ENCODE measurements at regions of chr11 and their contacts with region 1.

Region 1: GRCh38 chr11:128831174-128832120 is 35.6 kb downstream of the KCNJ1 start:
- DNase-seq: peak; percentile 75 to 93 (median 88)
- ATAC-seq: peak; percentile 81
- H3K4me3 ChIP-seq: peak overlapping the region; percentile 11 to 26
- H3K4me3 Mint-ChIP-seq: peak overlapping the region; percentile 55
- H3K27ac ChIP-seq: peak overlapping the region; percentile 31 to 84
- H3K27ac Mint-ChIP-seq: peak overlapping the region; percentile 80
- H3K4me1 ChIP-seq: peaks cover 9% of the 10 kb centered on the region
- H3K4me1 Mint-ChIP-seq: peaks cover 18% of the 10 kb centered on the region
- H3K27me3 ChIP-seq: no peaks in the 10 kb centered on the region
- H3K27me3 Mint-ChIP-seq: no peaks in the 10 kb centered on the region
- CTCF ChIP-seq: peak; percentile 87

Region 2: GRCh38 chr11:128039140-128040021 is 792.1 kb before region 1 on chr11:
- CTCF ChIA-PET with region 1: interaction called, 13 read pairs
- POLR2A ChIA-PET with region 1: no interaction called
- intact Hi-C with region 1: no loop called
- DNase-seq: peak; percentile 48 to 94 (median 79)
- ATAC-seq: peak; percentile 91
- H3K4me3 ChIP-seq: peak overlapping the region; percentile 40 to 50
- H3K4me3 Mint-ChIP-seq: peak overlapping the region; percentile 59
- H3K27ac ChIP-seq: peak overlapping the region; percentile 55 to 80
- H3K27ac Mint-ChIP-seq: peak overlapping the region; percentile 87
- H3K4me1 ChIP-seq: peaks cover 76% of the 10 kb centered on the region
- H3K4me1 Mint-ChIP-seq: peaks cover 56% of the 10 kb centered on the region
- H3K27me3 ChIP-seq: no peaks in the 10 kb centered on the region
- H3K27me3 Mint-ChIP-seq: no peaks in the 10 kb centered on the region
- CTCF ChIP-seq: peak; percentile 22

Region 3: DNA sequence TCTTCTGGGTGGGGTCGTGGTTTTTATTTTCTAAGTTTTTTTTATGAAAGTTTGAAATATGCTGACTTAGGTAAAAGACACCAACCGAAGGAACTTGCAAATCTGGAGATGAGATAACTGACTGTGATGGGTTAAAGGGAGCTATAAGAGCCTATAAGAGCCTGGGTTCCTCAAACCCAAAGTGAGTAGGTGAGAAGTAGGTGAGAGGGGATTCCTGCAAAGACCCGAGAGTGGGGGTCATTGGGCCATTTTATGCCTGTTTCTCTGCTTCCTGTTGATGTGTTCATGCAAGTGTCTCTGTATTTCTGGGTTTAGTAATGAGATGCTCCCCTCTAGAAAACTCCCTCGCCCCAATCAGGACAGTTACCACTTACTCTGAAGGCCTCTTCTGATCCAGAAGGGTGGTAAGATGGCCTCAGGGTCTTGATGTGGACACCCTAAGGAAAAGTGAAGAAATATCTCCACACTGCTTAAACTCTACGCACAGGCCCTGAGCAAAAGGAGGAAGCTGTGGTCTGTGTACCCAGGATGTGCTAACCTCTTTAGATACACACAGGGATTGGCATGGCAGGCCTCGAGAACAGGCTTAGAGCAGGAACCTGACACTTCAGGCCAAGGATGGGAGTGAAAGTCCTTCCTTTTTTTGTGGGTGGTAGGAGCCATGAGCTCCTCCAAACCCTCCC is 135.8 kb before region 1 on chr11:
- CTCF ChIA-PET with region 1: no interaction called
- POLR2A ChIA-PET with region 1: no interaction called
- intact Hi-C with region 1: loop called in 1 of 2 experiments (anchors 5 kb)
- DNase-seq: peak in 6 of 9 experiments; percentile 29 to 78 (median 54)
- ATAC-seq: peak; percentile 47
- H3K4me3 ChIP-seq: peak overlapping the region; percentile 93 to 95
- H3K4me3 Mint-ChIP-seq: peak overlapping the region; percentile 98
- H3K27ac ChIP-seq: peak overlapping the region; percentile 80 to 89
- H3K27ac Mint-ChIP-seq: peak overlapping the region; percentile 98
- H3K4me1 ChIP-seq: peaks cover 54% of the 10 kb centered on the region
- H3K4me1 Mint-ChIP-seq: peaks cover 58% of the 10 kb centered on the region
- H3K27me3 ChIP-seq: no peaks in the 10 kb centered on the region
- H3K27me3 Mint-ChIP-seq: no peaks in the 10 kb centered on the region
- CTCF ChIP-seq: no peak

Region 4: GRCh38 chr11:128848815-128849455 is 17.5 kb after region 1 on chr11:
- CTCF ChIA-PET with region 1: interaction called, 89 read pairs
- POLR2A ChIA-PET with region 1: interaction called, 3 read pairs
- intact Hi-C with region 1: no loop called
- DNase-seq: peak; percentile 42 to 80 (median 69)
- ATAC-seq: peak; percentile 70
- H3K4me3 ChIP-seq: no peak overlapping the region
- H3K4me3 Mint-ChIP-seq: no peak overlapping the region
- H3K27ac ChIP-seq: no peak overlapping the region
- H3K27ac Mint-ChIP-seq: no peak overlapping the region
- H3K4me1 ChIP-seq: peaks cover 14% of the 10 kb centered on the region
- H3K4me1 Mint-ChIP-seq: peaks cover 28% of the 10 kb centered on the region
- H3K27me3 ChIP-seq: no peaks in the 10 kb centered on the region
- H3K27me3 Mint-ChIP-seq: no peaks in the 10 kb centered on the region
- CTCF ChIP-seq: peak; percentile 73

Measured in CD8-positive, alpha-beta T cell (primary cell).